ENCODE measurements at regions of chr17 and their contacts with region 1.

Region 1: GRCh38 chr17:40598663-40599467 is 33.6 kb upstream of the CCR7 start:
- DNase-seq: peak; percentile 75
- H3K4me3 Mint-ChIP-seq: peak overlapping the region; percentile 22
- H3K27ac Mint-ChIP-seq: peak overlapping the region; percentile 94
- H3K4me1 Mint-ChIP-seq: peaks cover 91% of the 10 kb centered on the region
- H3K27me3 Mint-ChIP-seq: no peaks in the 10 kb centered on the region

Region 2: DNA sequence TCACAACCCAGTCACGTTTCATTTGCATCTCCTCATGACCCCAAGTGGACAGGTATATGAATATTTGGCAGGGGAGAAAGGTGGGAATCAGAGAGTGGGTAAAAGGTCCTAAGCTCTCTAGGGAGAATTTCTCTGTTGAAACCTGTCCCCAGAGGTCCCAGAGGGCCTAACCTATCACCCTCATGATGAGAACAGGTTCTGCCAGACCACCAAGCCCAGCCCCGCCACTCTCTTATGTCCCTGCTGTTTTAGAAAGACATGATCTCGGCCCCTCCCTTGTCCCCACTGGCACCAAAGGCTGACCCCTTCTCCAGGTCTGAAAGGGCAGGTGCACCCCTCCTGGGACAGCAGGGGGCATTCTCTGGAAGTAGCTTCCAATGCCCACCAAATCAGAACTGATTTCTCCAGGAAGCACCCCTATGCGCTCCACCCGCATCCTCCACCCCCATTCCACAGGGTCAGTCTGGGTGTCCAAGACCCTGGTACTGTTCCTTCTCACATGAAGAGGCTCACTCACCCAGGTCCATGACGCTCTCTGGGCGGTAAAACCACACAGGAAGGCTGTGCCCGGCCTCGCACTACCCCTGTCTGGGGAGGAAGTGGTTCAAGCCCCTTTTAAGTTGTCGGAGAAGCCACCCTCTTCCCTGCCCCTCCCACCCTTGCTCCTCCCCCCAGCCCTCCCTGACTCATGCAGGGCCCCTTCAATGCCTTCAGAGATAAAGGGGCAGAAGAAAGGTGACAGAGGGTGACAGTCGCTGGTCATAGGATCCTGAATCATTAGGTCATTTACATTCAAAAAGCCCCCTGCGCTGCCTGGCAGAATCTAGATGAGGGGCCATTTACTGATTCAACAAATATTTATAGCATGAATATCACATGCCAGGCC is 33.7 kb before region 1 on chr17 and contains the start of gene CCR7:
- CTCF ChIA-PET with region 1: interaction called, 25 read pairs
- DNase-seq: peak; percentile 90
- H3K4me3 Mint-ChIP-seq: peak within 1 kb of the TSS; percentile 91
- H3K27ac Mint-ChIP-seq: peak within 1 kb of the TSS; percentile 95
- H3K4me1 Mint-ChIP-seq: peaks cover 42% of the 10 kb centered on the region
- H3K27me3 Mint-ChIP-seq: no peaks in the 10 kb centered on the region

Region 3: DNA sequence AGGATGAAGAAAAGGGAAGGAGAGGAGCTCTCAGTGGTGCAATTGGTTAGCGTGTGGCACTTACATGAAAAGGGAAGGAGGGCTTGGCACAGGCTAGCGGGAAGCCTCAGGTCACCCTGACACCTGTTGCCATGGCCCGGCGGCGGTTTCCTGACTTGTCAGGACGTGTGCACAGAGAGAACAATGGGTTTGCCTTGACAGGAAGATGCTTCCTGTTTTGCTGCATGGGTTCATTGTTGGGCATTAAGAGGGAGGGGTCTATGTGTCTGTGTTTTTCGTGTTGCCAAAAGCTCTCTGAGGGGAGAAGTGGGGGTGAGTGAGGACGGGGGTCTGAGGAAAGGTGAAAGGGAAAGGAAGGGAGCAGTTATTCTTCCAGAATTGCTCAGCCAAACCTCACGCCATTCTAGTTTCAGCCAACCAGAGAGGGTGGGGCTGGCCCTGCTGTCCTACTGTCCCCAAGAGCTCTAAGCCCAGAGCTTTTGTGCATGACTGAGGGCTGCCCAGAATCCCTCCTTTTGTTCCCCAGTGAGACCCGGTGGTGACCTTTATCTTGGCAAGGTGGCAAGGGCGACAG is 16.4 kb before region 1 on chr17:
- CTCF ChIA-PET with region 1: interaction called, 10 read pairs
- DNase-seq: peak; percentile 88
- H3K4me3 Mint-ChIP-seq: peak overlapping the region; percentile 19
- H3K27ac Mint-ChIP-seq: peak overlapping the region; percentile 87
- H3K4me1 Mint-ChIP-seq: peaks cover 92% of the 10 kb centered on the region
- H3K27me3 Mint-ChIP-seq: no peaks in the 10 kb centered on the region

Region 4: DNA sequence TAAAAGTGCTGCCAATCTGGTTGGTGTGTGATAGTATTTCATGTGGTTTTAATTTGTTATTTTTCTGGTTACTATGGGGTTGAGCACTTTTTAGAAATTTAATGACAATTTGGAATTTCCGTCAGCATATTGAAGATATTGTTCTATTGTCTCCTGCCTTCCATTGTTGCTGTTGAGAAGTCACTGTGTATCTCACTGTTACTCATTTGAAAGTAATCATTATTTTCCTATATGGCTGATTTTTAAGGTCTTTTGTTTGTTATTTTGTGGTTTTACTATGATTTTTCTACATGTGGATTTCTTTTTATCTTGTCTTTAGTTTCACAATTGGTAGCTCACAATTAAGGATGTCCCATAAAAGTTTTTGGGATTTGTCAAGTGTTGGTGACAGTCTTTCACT is 164.9 kb after region 1 on chr17:
- CTCF ChIA-PET with region 1: no interaction called
- DNase-seq: no peak
- H3K4me3 Mint-ChIP-seq: no peak overlapping the region
- H3K27ac Mint-ChIP-seq: no peak overlapping the region
- H3K4me1 Mint-ChIP-seq: no peaks in the 10 kb centered on the region
- H3K27me3 Mint-ChIP-seq: peaks cover 29% of the 10 kb centered on the region

Region 5: DNA sequence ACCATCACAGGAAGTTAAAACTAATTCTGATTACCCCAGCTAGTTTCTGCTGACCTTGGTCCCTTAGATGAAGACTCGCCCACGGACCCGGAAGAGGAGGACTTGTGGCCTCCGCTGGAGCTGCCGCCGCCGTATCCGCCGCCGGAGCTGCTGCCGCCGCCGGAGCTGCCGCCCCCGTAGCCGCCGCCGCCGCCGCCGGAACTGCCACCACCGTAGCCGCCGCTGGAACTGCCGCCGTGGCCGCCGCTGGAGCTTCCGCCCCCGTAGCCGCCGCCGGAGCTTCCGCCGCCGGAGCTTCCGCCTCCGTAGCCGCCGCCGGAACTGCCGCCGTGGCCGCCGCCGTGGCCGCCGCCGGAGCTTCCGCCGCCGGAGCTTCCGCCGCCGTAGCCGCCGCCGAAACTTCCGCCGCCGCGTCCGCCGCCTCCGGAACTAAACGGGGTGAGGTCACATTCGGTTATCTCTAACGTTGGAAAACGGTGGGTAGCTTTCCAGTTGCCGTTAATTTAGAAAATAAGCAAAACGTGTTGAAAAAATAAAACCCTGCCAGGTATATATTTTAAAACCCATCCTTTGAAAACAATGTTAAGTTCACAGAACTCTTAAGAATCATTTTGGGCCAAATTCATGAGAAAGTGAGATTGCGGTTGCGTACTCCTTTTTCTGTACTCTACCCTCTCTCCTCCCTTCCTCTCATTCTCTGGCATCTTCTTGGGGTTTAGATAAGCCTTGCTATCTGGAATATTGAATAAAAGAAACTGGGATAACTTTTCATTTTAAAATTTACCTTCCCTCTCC is 220.1 kb after region 1 on chr17:
- CTCF ChIA-PET with region 1: no interaction called
- DNase-seq: peak; percentile 86
- H3K4me3 Mint-ChIP-seq: peak overlapping the region; percentile 82
- H3K27ac Mint-ChIP-seq: peak overlapping the region; percentile 96
- H3K4me1 Mint-ChIP-seq: peaks cover 29% of the 10 kb centered on the region
- H3K27me3 Mint-ChIP-seq: peaks cover 14% of the 10 kb centered on the region

Measured in activated naive CD4-positive, alpha-beta T cell treated with anti-CD3 and anti-CD28 coated beads, Interleukin-2, amount 10 ng/mL, durations not matched to agents 7 days and 5 days (primary cell).